SK-N-SH (cell line): ENCODE measurements at regions of chr1 and their contacts with region 1.

Region 1: DNA sequence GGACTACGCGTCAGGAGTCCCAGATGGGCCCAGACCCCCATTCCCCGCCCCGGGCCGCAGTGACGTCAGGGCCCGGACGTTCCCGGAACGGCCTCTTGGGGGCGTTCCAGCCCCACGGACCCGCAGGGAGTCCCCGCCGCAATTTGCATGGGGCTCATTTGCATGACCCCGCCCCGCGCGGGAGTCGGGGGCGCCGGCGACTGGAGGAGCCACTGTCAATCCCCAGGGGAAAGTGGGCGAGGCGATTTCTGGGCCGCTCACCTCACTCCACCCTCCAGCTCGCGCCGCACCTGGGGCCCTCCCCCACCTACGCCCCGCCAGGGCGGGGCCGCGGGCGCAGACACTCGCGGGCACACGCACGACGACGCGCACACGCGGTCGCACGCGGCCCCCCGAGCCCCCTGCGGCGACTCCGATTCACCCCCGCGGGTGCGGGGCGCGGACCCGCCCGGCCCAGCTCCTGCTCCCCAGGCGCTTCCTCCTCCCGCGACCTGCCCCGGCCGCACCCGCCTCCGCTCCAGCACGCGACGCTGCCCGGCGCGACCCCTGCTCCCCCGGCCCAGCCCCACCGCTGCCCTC is 13.2 kb downstream of the AGRN start:
- DNase-seq: peak; percentile 97
- H3K4me3 ChIP-seq: peak overlapping the region; percentile 44 to 47; a peak in 3 of 4 replicates
- H3K27ac ChIP-seq: no peak overlapping the region
- H3K4me1 ChIP-seq: peaks cover 0 to 11% of the 10 kb centered on the region in 2 experiments; a peak in 1 of 4 replicates
- H3K27me3 ChIP-seq: no peaks in the 10 kb centered on the region
- CTCF ChIP-seq: peak; percentile 63
- EP300 ChIP-seq: no peak
- RAD21 ChIP-seq: peak; percentile 83

Region 2: DNA sequence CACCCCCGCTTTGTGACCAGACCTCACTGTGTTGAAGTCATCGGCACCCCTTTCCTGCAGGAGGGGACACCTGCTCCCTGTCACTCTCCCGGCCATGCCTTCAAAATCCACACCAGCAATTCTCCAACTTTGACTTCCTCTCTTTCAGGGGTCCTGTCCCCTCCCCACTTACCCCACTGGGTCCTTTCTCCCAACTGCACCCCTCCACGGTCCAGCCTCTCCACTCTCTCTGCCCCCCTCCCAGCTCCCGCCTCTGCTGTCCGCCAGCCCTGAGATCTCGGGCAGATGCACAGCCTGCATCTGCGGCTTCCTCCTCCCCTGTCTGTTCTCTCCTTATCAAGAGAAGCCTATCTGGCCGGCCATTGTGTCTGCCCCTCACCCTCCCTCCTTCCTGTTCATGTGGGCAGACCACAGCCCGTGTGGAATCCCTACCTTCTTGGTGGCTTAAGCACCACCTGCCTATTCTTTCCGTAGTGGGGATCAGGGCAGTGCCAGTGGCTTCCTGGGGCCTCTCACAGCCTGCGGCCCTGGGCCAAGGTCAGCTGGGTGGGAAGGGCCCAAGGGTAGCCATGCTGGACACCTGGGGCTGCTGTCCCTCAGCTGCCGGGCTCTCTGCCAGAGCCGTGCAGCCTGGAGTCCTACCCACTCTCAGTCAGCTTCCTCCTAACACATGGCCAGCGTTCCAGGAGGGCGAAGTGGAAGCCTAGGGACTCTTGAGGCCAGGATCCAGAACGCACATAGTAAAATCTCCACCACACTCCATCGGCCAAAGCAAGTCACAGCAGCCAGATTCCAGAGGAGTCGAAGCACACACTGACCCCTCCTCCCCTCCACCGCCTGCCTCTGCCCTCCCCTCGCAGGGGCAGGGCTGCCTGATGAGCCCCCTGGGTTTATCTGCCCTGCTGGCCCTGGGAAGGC is 28.1 kb before region 1 on chr1:
- CTCF ChIA-PET with region 1: interaction called, 37 read pairs
- POLR2A ChIA-PET with region 1: no interaction called
- DNase-seq: peak; percentile 90
- H3K4me3 ChIP-seq: peak overlapping the region in 1 of 2 experiments; percentile 18; a peak in 1 of 4 replicates
- H3K27ac ChIP-seq: peak overlapping the region in 1 of 2 experiments; percentile 98; a peak in 2 of 4 replicates
- H3K4me1 ChIP-seq: peaks cover 0 to 43% of the 10 kb centered on the region in 2 experiments; a peak in 1 of 4 replicates
- H3K27me3 ChIP-seq: peaks cover 7% of the 10 kb centered on the region; the same call in 1 of the 2 replicates
- CTCF ChIP-seq: no peak
- EP300 ChIP-seq: peak in 1 of 2 experiments; percentile 25; a peak in 1 of 4 replicates
- RAD21 ChIP-seq: no peak

Region 3: GRCh38 chr1:1013105-1013921 is 19.8 kb before region 1 on chr1 and contains the start of gene ISG15:
- CTCF ChIA-PET with region 1: interaction called, 21 read pairs
- POLR2A ChIA-PET with region 1: no interaction called
- DNase-seq: no peak
- H3K4me3 ChIP-seq: peak within 1 kb of the TSS; percentile 45 to 52; a peak in 3 of 4 replicates
- H3K27ac ChIP-seq: peak within 1 kb of the TSS in 1 of 2 experiments; percentile 70; a peak in 2 of 4 replicates
- H3K4me1 ChIP-seq: peaks cover 0 to 7% of the 10 kb centered on the region in 2 experiments; a peak in 1 of 4 replicates
- H3K27me3 ChIP-seq: no peaks in the 10 kb centered on the region
- CTCF ChIP-seq: no peak
- EP300 ChIP-seq: no peak
- RAD21 ChIP-seq: no peak
- polyA plus RNA-seq, gene ISG15: 22.9 and 28.6 TPM in 2 replicates

Region 4: GRCh38 chr1:1019122-1019999 is 13.7 kb before region 1 on chr1:
- CTCF ChIA-PET with region 1: interaction called, 52 read pairs
- POLR2A ChIA-PET with region 1: no interaction called
- DNase-seq: peak; percentile 99
- H3K4me3 ChIP-seq: peak overlapping the region in 1 of 2 experiments; percentile 50; a peak in 2 of 4 replicates
- H3K27ac ChIP-seq: peak overlapping the region in 1 of 2 experiments; percentile 81; a peak in 2 of 4 replicates
- H3K4me1 ChIP-seq: peaks cover 0 to 10% of the 10 kb centered on the region in 2 experiments; a peak in 1 of 4 replicates
- H3K27me3 ChIP-seq: no peaks in the 10 kb centered on the region
- CTCF ChIP-seq: peak; percentile 44
- EP300 ChIP-seq: no peak
- RAD21 ChIP-seq: no peak

Region 5: DNA sequence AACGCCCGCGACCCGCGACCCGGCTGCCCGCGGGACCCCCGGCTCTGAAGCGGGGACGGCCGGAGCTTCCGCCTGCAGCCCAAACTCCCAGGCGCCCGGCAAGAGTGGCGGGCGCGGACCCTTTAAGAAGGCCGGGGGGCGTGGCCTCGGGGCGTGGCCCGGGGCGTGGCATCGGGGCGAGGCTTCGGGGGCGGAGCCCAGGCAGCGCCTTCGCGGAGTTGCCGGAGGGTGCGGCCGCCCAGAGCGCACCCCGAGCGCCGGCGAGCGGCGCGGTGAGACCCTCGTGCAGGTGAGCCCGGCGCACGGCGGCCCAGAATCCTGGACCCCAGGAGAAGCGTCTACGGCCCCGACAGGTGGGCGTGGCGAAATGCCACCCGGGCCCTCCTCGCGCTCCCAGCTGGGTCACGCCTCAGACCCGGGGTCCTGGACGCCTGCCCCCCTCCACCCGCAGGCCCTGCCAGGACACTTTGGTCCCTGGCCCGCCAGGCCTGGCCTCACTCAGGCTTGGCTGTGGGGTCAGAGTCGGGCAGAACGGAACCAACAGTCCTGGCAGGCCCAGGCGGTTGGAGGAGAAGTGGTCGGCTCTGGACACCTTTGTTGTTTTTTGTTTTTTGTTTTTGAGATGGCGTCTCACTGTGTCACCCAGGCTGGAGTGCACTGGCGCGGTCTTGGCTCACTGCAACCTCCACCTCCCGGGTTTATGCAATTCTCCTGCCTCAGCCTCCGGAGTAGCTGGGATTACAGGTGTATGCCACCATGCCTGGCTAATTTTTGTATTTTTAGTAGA is 26.6 kb after region 1 on chr1:
- CTCF ChIA-PET with region 1: interaction called, 93 read pairs
- POLR2A ChIA-PET with region 1: no interaction called
- DNase-seq: peak; percentile 96
- H3K4me3 ChIP-seq: peak overlapping the region; percentile 51 to 56
- H3K27ac ChIP-seq: no peak overlapping the region
- H3K4me1 ChIP-seq: peaks cover 0 to 6% of the 10 kb centered on the region in 2 experiments; a peak in 1 of 4 replicates
- H3K27me3 ChIP-seq: peaks cover 20% of the 10 kb centered on the region; the same call in 1 of the 2 replicates
- CTCF ChIP-seq: no peak
- EP300 ChIP-seq: no peak
- RAD21 ChIP-seq: no peak

Region 6: DNA sequence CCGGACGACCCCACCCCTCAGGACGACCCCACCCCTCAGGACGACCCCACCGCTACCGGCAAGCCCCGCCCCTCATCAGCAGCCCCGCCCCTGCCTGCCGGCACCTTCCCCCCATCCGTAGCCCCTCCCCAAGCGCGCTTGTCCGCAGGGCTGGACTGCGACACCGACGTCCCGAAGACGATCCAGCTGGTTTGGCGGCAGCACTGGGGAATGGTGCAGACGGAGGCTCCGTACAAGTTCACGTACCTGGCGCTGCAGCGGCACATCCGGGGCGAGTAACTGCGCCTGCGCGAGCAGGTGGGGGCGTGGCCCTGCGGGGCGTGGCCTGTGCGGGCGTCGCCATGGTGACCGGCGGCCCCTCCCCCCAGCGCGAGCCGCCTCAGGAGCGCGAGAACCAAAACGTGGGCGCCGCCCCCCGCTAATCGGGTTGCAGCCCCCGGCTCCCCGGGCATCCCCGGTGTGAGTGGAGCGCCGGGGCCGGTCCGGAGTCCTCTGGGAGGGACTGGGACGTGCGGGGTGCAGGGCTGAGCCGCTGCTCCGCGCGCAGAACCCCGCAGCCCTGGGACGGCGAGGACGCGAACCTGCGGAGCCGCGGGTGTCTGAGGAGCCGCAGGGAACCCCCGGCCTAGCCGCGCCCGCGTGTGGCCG is 36.1 kb after region 1 on chr1:
- CTCF ChIA-PET with region 1: interaction called, 93 read pairs
- POLR2A ChIA-PET with region 1: no interaction called
- DNase-seq: peak; percentile 95
- H3K4me3 ChIP-seq: peak overlapping the region; percentile 46 to 59; a peak in 3 of 4 replicates
- H3K27ac ChIP-seq: no peak overlapping the region; a peak in 1 of 4 replicates
- H3K4me1 ChIP-seq: peaks cover 0 to 4% of the 10 kb centered on the region in 2 experiments; a peak in 1 of 4 replicates
- H3K27me3 ChIP-seq: 0 out of 2 replicates have a peak, but pooled peaks cover 12% of the 10 kb centered on the region
- CTCF ChIP-seq: no peak
- EP300 ChIP-seq: no peak
- RAD21 ChIP-seq: no peak

Region 7: DNA sequence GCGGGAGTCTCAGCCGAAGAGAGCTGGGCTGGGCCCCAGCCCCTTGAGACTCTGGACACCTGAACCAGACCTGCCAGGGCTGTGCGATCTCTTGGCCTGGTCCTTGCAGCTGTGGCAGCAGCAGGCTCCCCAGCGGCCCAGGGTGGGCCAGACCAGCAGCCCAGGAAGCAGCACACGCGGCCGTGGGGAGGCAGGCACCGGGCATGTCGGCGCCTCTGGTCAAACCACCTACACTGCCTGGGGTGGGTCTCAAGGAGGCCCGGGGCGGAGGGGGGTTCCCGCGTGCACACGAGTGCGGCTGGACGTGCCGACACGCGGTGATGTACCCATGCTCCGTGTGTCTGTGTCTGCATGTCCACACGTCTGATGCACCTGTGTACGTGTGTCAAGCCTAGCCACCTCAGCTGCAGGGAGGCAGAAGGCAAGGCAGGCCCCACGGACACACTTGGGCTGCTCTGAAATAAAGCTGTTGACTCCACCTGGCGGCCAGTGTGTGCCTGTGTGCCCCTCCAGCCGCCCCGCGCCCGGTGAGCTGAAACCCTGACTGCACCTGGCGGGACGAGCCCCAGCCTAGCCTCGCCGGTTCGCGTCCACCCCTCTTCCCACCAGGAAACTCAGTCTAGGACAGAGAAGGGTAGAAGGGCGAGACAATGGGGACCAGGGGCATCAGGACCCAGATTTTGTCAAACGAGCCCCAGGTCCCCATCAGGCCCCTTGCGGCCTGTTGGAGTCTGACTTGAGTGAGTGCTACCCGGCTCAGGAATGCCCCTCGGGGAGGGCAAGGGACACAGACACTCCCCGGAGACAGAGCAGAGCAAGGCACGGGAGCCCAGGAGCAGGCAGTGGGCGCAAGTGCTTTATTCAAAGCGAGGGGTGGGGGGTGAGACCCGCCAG is 258.7 kb after region 1 on chr1:
- CTCF ChIA-PET with region 1: interaction called, 26 read pairs
- POLR2A ChIA-PET with region 1: no interaction called
- DNase-seq: peak; percentile 84
- H3K4me3 ChIP-seq: no peak overlapping the region
- H3K27ac ChIP-seq: no peak overlapping the region
- H3K4me1 ChIP-seq: peaks cover 0 to 6% of the 10 kb centered on the region in 2 experiments; a peak in 1 of 4 replicates
- H3K27me3 ChIP-seq: no peaks in the 10 kb centered on the region
- CTCF ChIP-seq: peak; percentile 57
- EP300 ChIP-seq: no peak
- RAD21 ChIP-seq: peak; percentile 70